SK-MEL-5 (cell line): ENCODE measurements at regions of chr7 and their contacts with region 1.

Region 1: GRCh38 chr7:16431646-16432424 is 10.5 kb upstream of the CRPPA start:
- DNase-seq: peak; percentile 95

Region 2: GRCh38 chr7:16295558-16295957 is 136.3 kb before region 1 on chr7:
- in situ Hi-C with region 1: no loop called
- DNase-seq: no peak

Region 3: DNA sequence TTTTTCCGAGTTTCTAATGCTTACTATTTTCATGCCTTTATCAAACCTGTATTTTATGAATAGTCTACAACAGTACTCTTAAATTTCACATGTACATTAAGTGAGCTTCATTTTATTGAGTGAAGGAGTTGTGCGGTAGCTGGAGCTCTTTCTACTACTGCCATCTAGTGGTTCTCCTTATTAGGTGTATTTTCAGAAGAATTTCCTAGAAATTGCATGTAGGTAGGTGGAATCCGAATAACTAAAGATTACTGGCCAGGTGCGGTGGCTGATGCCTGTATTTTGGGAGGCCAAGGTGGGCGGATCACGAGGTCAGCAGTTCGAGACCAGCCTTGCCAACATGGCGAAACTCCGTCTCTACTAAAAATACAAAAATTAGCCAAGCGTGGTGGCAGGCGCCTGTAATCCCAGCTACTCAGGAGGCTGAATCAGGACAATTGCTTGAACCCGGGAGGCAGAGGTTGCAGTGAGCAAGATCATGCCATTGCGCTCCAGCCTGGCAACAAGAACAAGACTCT is 133.1 kb after region 1 on chr7:
- in situ Hi-C with region 1: loop called (anchors 25 kb)
- DNase-seq: peak; percentile 77